ENCODE measurements at regions of chr2 and their contacts with region 1.

Region 1: GRCh38 chr2:64644177-64645004 is 9.3 kb downstream of the SERTAD2 start:
- DNase-seq: peak in 7 of 9 experiments; percentile 45 to 80 (median 66)
- ATAC-seq: peak; percentile 74
- H3K4me3 ChIP-seq: peak overlapping the region; percentile 42 to 47
- H3K4me3 Mint-ChIP-seq: peak overlapping the region; percentile 89
- H3K27ac ChIP-seq: peak overlapping the region; percentile 50 to 82
- H3K27ac Mint-ChIP-seq: peak overlapping the region; percentile 93
- H3K4me1 ChIP-seq: peaks cover 71% of the 10 kb centered on the region
- H3K4me1 Mint-ChIP-seq: peaks cover 94% of the 10 kb centered on the region
- H3K27me3 ChIP-seq: no peaks in the 10 kb centered on the region
- H3K27me3 Mint-ChIP-seq: no peaks in the 10 kb centered on the region
- CTCF ChIP-seq: no peak

Region 2: DNA sequence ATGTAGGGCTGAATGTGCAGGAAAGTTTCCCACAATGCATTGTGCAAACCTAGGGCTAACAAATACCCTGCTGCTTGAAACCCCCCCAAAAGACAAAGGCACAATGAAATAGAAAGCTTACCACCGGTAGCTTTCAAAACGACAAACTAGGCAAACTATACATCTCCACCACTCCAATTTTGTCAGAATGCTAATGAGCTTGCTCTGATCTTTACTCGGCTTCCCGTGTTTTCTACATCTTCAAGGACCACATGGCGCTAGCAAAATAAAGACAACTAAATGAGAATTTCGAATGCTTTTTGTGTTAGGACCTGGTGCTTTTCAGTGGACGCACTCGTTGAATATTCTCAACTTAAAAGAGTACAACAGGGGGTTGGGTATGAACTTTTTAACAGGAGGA is 1631.0 kb before region 1 on chr2:
- CTCF ChIA-PET with region 1: no interaction called
- POLR2A ChIA-PET with region 1: no interaction called
- intact Hi-C with region 1: no loop called
- DNase-seq: no peak
- ATAC-seq: no peak
- H3K4me3 ChIP-seq: no peak overlapping the region
- H3K4me3 Mint-ChIP-seq: no peak overlapping the region
- H3K27ac ChIP-seq: no peak overlapping the region
- H3K27ac Mint-ChIP-seq: no peak overlapping the region
- H3K4me1 ChIP-seq: no peaks in the 10 kb centered on the region
- H3K4me1 Mint-ChIP-seq: no peaks in the 10 kb centered on the region
- H3K27me3 ChIP-seq: no peaks in the 10 kb centered on the region
- H3K27me3 Mint-ChIP-seq: no peaks in the 10 kb centered on the region
- CTCF ChIP-seq: no peak

Region 3: DNA sequence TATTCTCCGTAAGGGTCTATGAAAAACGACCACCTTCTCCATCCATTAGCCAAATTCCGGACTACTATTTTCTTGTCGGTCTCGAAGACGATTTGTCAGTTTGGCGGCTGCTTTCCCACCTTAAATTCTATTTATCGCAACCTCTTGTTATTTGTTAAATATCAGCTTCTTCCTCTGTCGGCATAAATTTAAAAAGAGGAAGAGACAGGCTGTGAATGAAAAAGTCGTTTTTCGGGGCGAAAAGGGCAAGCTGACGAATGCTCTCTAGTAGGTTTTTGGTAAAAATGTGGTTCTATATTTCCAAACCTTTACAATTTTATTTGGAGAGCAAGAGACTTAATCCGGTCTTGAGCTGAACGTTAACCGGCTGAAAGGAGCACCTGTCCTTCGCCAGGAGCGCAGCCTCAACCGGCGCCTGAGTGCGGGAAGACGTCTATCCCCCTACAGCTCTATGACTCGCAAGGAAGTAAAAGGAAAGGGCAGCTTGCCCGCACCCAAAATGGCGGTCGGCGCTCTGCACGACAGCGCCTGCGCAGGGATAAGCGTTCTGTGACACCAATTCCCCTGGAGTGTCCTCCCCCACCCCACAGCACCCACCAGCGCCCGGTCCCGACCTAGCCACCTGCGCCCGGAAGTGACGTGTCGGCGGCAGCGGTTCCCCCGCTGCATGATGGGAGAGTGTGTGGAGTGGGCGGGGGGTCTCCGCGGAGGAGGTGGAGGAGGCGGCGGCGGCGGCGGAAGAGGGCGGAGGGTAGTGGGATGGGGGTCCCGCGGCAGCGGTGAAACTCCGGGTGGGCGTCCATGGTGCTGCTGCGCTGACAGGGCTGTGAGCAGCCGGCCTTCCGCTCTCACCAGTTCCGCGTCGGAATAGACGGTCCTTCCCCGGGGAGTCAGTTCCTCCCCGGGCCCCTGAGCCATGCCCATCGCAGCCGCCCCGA is 120.5 kb before region 1 on chr2 and contains the start of gene AFTPH:
- CTCF ChIA-PET with region 1: interaction called, 6 read pairs
- POLR2A ChIA-PET with region 1: interaction called, 3 read pairs
- intact Hi-C with region 1: loop called in 1 of 2 experiments (anchors 5 kb)
- DNase-seq: peak; percentile 99 to 100 (median 99)
- ATAC-seq: peak; percentile 88
- H3K4me3 ChIP-seq: peak within 1 kb of the TSS; percentile 69 to 83
- H3K4me3 Mint-ChIP-seq: peak within 1 kb of the TSS; percentile 99
- H3K27ac ChIP-seq: peak within 1 kb of the TSS; percentile 77 to 89
- H3K27ac Mint-ChIP-seq: peak within 1 kb of the TSS; percentile 99
- H3K4me1 ChIP-seq: peaks cover 20% of the 10 kb centered on the region
- H3K4me1 Mint-ChIP-seq: peaks cover 38% of the 10 kb centered on the region
- H3K27me3 ChIP-seq: no peaks in the 10 kb centered on the region
- H3K27me3 Mint-ChIP-seq: no peaks in the 10 kb centered on the region
- CTCF ChIP-seq: no peak
- total RNA-seq, gene AFTPH: 23.0 to 25.9 TPM

Region 4: GRCh38 chr2:64617631-64618151 is 26.7 kb before region 1 on chr2:
- CTCF ChIA-PET with region 1: interaction called, 11 read pairs
- POLR2A ChIA-PET with region 1: interaction called, 4 read pairs
- intact Hi-C with region 1: no loop called
- DNase-seq: no peak
- ATAC-seq: no peak
- H3K4me3 ChIP-seq: no peak overlapping the region
- H3K4me3 Mint-ChIP-seq: no peak overlapping the region
- H3K27ac ChIP-seq: no peak overlapping the region
- H3K27ac Mint-ChIP-seq: no peak overlapping the region
- H3K4me1 ChIP-seq: no peaks in the 10 kb centered on the region
- H3K4me1 Mint-ChIP-seq: peaks cover 9% of the 10 kb centered on the region
- H3K27me3 ChIP-seq: no peaks in the 10 kb centered on the region
- H3K27me3 Mint-ChIP-seq: no peaks in the 10 kb centered on the region
- CTCF ChIP-seq: no peak

Region 5: DNA sequence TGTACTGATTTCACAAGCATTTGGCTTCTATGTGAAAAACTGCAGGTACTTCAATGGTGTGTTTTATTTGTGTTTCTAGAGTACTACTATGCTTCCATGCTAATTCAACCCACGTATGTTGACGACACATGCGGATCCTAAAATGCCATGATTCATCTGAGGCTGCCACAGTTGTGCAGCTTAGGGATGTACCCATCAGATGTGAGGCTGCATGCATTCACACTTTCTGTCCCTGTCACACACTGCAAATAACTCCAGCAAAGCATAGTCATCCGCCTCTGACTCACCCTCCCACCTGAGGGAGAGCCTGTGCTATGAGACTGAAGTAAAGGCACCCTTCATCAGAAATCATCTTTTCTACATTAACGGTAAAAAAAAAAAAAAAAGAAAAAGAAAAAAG is 31.5 kb after region 1 on chr2:
- CTCF ChIA-PET with region 1: interaction called, 10 read pairs
- POLR2A ChIA-PET with region 1: no interaction called
- intact Hi-C with region 1: no loop called
- DNase-seq: peak in 3 of 9 experiments; percentile 22 to 59 (median 42)
- ATAC-seq: peak; percentile 92
- H3K4me3 ChIP-seq: no peak overlapping the region
- H3K4me3 Mint-ChIP-seq: no peak overlapping the region
- H3K27ac ChIP-seq: no peak overlapping the region
- H3K27ac Mint-ChIP-seq: peak overlapping the region; percentile 37
- H3K4me1 ChIP-seq: peaks cover 25% of the 10 kb centered on the region
- H3K4me1 Mint-ChIP-seq: peaks cover 56% of the 10 kb centered on the region
- H3K27me3 ChIP-seq: no peaks in the 10 kb centered on the region
- H3K27me3 Mint-ChIP-seq: no peaks in the 10 kb centered on the region
- CTCF ChIP-seq: no peak

Region 6: GRCh38 chr2:64750817-64751285 is 106.5 kb after region 1 on chr2:
- CTCF ChIA-PET with region 1: interaction called, 56 read pairs
- POLR2A ChIA-PET with region 1: interaction called, 142 read pairs
- intact Hi-C with region 1: loop called in 1 of 2 experiments (anchors 1 kb)
- DNase-seq: peak; percentile 95 to 100 (median 97)
- ATAC-seq: peak; percentile 81
- H3K4me3 ChIP-seq: peak overlapping the region; percentile 86 to 99
- H3K4me3 Mint-ChIP-seq: peak overlapping the region; percentile 99
- H3K27ac ChIP-seq: peak overlapping the region; percentile 88 to 95
- H3K27ac Mint-ChIP-seq: peak overlapping the region; percentile 95
- H3K4me1 ChIP-seq: peaks cover 19% of the 10 kb centered on the region
- H3K4me1 Mint-ChIP-seq: peaks cover 31% of the 10 kb centered on the region
- H3K27me3 ChIP-seq: no peaks in the 10 kb centered on the region
- H3K27me3 Mint-ChIP-seq: no peaks in the 10 kb centered on the region
- CTCF ChIP-seq: no peak

Region 7: DNA sequence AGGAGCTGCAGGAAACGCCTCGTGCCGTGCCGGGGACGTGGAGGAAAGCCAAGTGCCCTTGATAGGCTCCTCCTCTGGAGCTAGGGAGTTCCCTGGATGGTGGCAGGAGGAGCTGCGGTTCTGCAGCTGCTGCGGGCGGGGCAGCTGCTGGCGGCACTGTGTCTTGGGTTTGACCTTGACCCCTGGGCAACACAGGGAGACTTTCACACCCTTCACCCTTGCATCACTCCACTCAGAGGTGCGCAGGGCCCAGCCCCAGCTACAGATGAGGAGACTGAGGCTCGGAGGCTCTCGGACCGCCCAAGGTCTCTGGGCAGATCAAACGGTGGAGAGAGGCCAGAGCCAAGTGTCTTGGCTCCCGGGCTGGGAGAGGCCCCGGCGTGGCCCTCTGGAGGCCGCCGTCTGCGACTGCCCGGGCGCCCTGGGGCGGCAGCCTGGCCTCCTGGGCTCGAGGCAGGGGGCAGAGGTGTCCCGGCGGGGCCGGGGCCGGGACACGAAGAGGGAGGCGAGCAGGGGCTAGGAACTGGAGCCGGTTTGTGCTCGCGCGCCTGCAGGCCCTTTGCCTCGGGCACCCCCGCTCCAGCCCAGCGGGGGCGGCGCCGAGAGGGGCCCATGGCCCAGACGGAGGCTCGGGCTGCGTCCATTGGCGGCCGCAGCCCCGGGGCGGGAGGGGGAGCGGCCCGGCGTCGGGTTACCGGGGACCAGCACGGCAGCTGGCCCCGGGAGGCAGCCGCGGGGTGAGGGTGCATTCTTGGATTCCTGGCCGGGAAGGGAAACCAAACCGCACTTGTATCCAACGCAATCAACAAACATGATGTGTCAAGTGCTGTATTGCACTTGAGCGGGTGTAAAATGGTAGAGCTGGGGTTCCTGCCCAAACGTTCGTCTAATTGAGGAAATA is 215.2 kb after region 1 on chr2:
- CTCF ChIA-PET with region 1: interaction called, 28 read pairs
- POLR2A ChIA-PET with region 1: interaction called, 3 read pairs
- intact Hi-C with region 1: no loop called
- DNase-seq: peak in 1 of 9 experiments; percentile 31
- ATAC-seq: no peak
- H3K4me3 ChIP-seq: peak overlapping the region in 1 of 2 experiments; percentile 8
- H3K4me3 Mint-ChIP-seq: peak overlapping the region; percentile 58
- H3K27ac ChIP-seq: no peak overlapping the region
- H3K27ac Mint-ChIP-seq: no peak overlapping the region
- H3K4me1 ChIP-seq: peaks cover 15% of the 10 kb centered on the region
- H3K4me1 Mint-ChIP-seq: peaks cover 5% of the 10 kb centered on the region
- H3K27me3 ChIP-seq: peaks cover 4 to 6% of the 10 kb centered on the region in 2 experiments
- H3K27me3 Mint-ChIP-seq: peaks cover 5% of the 10 kb centered on the region
- CTCF ChIP-seq: no peak

Measured in CD8-positive, alpha-beta T cell (primary cell).